MCF 10A (cell line): ENCODE measurements at regions of chr4 and their contacts with region 1.

Region 1: GRCh38 chr4:147683717-147684700 is at the start of gene PRMT9:
- DNase-seq: peak; percentile 87
- H3K4me3 Mint-ChIP-seq: peak within 1 kb of the TSS; percentile 88
- H3K27ac Mint-ChIP-seq: peak within 1 kb of the TSS; percentile 89
- H3K4me1 Mint-ChIP-seq: peaks cover 11% of the 10 kb centered on the region
- H3K27me3 Mint-ChIP-seq: no peaks in the 10 kb centered on the region
- CTCF ChIP-seq: no peak
- total RNA-seq, gene PRMT9: 6.1 and 8.4 TPM in 2 replicates

Region 2: DNA sequence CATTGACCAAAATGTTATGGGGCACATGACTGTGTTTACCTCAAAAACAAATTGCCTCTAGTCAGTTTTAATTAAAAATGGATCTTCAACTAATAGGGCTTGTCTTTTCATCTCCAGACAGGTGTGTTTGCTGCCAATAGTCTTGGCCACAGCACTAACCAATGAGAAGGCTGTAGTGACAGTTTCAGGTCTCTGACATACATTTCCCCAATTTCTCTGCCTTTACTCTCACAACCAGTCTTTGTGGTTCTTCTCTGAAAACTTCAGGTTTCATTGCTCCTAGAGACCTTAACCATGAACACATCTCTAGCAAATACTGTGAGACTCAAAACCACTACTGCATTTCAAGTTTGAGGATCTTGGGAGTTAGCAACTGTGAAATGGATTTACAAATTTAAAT is 206.6 kb before region 1 on chr4:
- CTCF ChIA-PET with region 1: no interaction called
- POLR2A ChIA-PET with region 1: no interaction called
- intact Hi-C with region 1: no loop called
- DNase-seq: no peak
- H3K4me3 Mint-ChIP-seq: no peak overlapping the region
- H3K27ac Mint-ChIP-seq: no peak overlapping the region
- H3K4me1 Mint-ChIP-seq: peaks cover 16% of the 10 kb centered on the region
- H3K27me3 Mint-ChIP-seq: no peaks in the 10 kb centered on the region
- CTCF ChIP-seq: no peak

Region 3: DNA sequence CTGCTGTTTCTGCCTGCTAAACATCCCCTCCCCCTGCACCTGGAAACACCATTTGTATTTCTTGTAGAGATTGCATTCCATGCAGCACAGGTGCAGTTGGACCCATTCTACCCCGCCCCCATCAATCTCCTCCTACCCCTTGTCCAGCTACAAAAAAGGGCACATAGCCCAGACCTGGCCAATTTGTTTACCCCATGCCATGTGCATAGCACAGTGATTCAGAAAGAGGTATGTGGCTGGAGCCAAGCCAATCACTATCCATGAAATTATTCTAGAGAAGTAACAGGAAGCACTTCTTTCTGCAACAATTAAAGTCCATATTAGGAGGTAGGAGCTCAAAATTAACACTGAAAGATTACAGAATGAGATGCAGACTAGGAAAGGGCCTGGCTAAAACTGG is 87.0 kb before region 1 on chr4:
- CTCF ChIA-PET with region 1: interaction called, 3 read pairs
- POLR2A ChIA-PET with region 1: interaction called, 15 read pairs
- intact Hi-C with region 1: no loop called
- DNase-seq: peak; percentile 94
- H3K4me3 Mint-ChIP-seq: no peak overlapping the region
- H3K27ac Mint-ChIP-seq: peak overlapping the region; percentile 97
- H3K4me1 Mint-ChIP-seq: peaks cover 35% of the 10 kb centered on the region
- H3K27me3 Mint-ChIP-seq: no peaks in the 10 kb centered on the region
- CTCF ChIP-seq: no peak

Region 4: GRCh38 chr4:147714575-147715401 is 30.8 kb after region 1 on chr4:
- CTCF ChIA-PET with region 1: interaction called, 4 read pairs
- POLR2A ChIA-PET with region 1: interaction called, 15 read pairs
- intact Hi-C with region 1: no loop called
- DNase-seq: peak; percentile 68
- H3K4me3 Mint-ChIP-seq: no peak overlapping the region
- H3K27ac Mint-ChIP-seq: no peak overlapping the region
- H3K4me1 Mint-ChIP-seq: no peaks in the 10 kb centered on the region
- H3K27me3 Mint-ChIP-seq: no peaks in the 10 kb centered on the region
- CTCF ChIP-seq: no peak

Region 5: DNA sequence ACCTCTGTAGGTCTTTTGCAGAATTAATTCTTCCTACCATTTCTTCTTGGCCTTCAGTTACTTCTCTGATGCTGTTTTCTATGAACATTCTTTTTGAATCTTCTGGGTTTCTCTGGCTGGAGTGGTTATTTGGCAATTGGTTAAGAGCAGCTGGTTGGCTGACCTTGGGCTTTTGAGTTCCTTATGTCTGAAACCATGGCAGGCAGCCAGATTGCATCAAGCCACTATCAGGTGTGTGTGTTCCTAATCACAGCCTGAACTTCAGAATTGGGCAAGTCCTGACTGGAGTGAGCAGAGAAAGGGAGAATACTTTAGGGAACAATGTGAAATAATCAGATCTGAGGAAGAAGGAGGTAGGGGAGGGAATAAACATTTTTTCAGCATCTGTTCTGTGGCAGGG is 138.1 kb after region 1 on chr4:
- CTCF ChIA-PET with region 1: no interaction called
- POLR2A ChIA-PET with region 1: interaction called, 10 read pairs
- intact Hi-C with region 1: no loop called
- DNase-seq: peak; percentile 99
- H3K4me3 Mint-ChIP-seq: peak overlapping the region; percentile 54
- H3K27ac Mint-ChIP-seq: peak overlapping the region; percentile 81
- H3K4me1 Mint-ChIP-seq: peaks cover 53% of the 10 kb centered on the region
- H3K27me3 Mint-ChIP-seq: no peaks in the 10 kb centered on the region
- CTCF ChIP-seq: no peak